CD8-positive, alpha-beta T cell (primary cell): ENCODE measurements at regions of chr11 and their contacts with region 1.

Region 1: GRCh38 chr11:34357701-34358257 is at the start of gene ABTB2:
- DNase-seq: peak; percentile 94 to 98 (median 97)
- ATAC-seq: peak; percentile 89
- H3K4me3 ChIP-seq: peak within 1 kb of the TSS; percentile 65 to 86
- H3K4me3 Mint-ChIP-seq: peak within 1 kb of the TSS; percentile 87
- H3K27ac ChIP-seq: peak within 1 kb of the TSS; percentile 21 to 38
- H3K27ac Mint-ChIP-seq: peak within 1 kb of the TSS; percentile 74
- H3K4me1 ChIP-seq: peaks cover 22% of the 10 kb centered on the region
- H3K4me1 Mint-ChIP-seq: peaks cover 19% of the 10 kb centered on the region
- H3K27me3 ChIP-seq: peaks cover 18 to 26% of the 10 kb centered on the region in 2 experiments
- H3K27me3 Mint-ChIP-seq: peaks cover 43% of the 10 kb centered on the region
- CTCF ChIP-seq: no peak
- total RNA-seq, gene ABTB2: 2.2 to 2.7 TPM

Region 2: DNA sequence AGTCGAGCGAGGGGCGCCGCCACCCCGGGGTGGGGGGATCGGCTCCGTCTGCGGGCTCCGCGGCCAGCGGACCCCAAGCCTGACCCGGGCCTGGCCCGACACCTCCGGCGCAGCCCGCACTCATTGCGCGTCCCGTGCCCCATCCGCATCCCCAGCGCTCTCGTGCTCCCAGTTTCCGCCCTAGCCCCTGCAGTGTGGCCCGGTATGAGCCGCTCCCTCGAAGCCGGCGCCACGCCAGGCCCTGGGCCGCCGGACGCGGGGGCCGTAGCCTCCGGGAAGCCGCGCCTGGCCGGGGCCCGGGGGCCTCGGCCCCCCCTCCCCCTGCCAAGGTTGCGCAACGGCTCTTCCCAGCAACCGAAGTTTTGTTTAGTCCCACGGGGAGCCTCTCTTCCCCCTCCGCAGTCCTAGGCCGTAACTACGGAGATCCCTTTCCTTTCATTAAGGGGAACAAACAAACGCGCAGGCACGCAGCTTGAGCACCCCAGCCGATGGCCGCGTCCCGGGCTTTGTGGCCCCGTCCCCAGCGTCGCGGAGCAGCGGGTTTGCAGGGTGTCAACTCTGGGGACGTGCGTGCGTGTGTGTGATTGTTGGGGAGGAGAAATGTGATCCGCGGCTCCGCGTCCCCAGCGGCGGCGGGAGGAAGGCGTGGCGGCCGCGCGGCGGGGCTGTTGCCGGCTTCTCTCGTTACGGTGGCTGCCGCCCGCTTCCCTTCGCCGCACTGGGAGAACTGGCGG is 1099.7 kb before region 1 on chr11:
- CTCF ChIA-PET with region 1: no interaction called
- POLR2A ChIA-PET with region 1: no interaction called
- intact Hi-C with region 1: loop called in 1 of 2 experiments (anchors 5 kb)
- DNase-seq: peak; percentile 48 to 88 (median 73)
- ATAC-seq: peak; percentile 61
- H3K4me3 ChIP-seq: peak overlapping the region; percentile 72 to 98
- H3K4me3 Mint-ChIP-seq: peak overlapping the region; percentile 93
- H3K27ac ChIP-seq: peak overlapping the region; percentile 92 to 98
- H3K27ac Mint-ChIP-seq: peak overlapping the region; percentile 99
- H3K4me1 ChIP-seq: peaks cover 28% of the 10 kb centered on the region
- H3K4me1 Mint-ChIP-seq: peaks cover 46% of the 10 kb centered on the region
- H3K27me3 ChIP-seq: no peaks in the 10 kb centered on the region
- H3K27me3 Mint-ChIP-seq: no peaks in the 10 kb centered on the region
- CTCF ChIP-seq: peak; percentile 23

Region 3: DNA sequence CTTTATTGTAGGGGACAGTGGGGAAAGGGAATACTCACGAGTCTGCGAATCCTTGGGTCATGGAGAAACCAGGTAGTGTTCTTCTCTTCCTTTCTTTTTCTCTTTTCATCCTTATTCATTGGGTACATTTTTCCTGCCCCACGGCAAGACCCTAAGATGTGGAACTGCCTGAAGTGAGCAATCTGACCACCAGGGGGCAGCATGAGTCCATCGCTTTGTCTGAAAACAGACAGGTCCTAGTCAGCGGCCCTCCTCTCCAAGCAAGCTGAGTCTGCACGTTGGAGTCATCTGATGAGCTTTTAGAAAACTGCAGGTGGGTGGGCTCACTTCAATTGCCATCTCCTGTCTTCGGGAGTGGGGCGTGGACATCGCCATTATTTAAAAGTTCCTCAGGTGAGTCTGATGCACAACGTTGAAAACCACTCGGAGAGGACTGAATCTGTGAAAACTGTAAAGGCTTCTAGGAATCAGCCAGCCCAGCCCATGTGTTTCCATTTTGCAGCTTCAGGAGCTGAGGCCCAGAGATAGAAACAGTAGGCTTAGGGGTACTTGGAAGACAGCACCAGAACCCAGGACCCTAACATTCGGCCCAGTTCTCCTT is 549.5 kb before region 1 on chr11:
- CTCF ChIA-PET with region 1: interaction called, 3 read pairs
- POLR2A ChIA-PET with region 1: no interaction called
- intact Hi-C with region 1: loop called (anchors 1 kb)
- DNase-seq: peak; percentile 69 to 93 (median 83)
- ATAC-seq: peak; percentile 97
- H3K4me3 ChIP-seq: no peak overlapping the region
- H3K4me3 Mint-ChIP-seq: no peak overlapping the region
- H3K27ac ChIP-seq: no peak overlapping the region
- H3K27ac Mint-ChIP-seq: no peak overlapping the region
- H3K4me1 ChIP-seq: no peaks in the 10 kb centered on the region
- H3K4me1 Mint-ChIP-seq: peaks cover 2% of the 10 kb centered on the region
- H3K27me3 ChIP-seq: no peaks in the 10 kb centered on the region
- H3K27me3 Mint-ChIP-seq: peaks cover 9% of the 10 kb centered on the region
- CTCF ChIP-seq: peak; percentile 90

Region 4: GRCh38 chr11:34051349-34052035 is 306.3 kb before region 1 on chr11 and contains the start of gene CAPRIN1:
- CTCF ChIA-PET with region 1: no interaction called
- POLR2A ChIA-PET with region 1: interaction called, 10 read pairs
- intact Hi-C with region 1: loop called (anchors 1 to 2 kb)
- DNase-seq: peak; percentile 71 to 93 (median 83)
- ATAC-seq: peak; percentile 70
- H3K4me3 ChIP-seq: peak within 1 kb of the TSS; percentile 79 to 85
- H3K4me3 Mint-ChIP-seq: peak within 1 kb of the TSS; percentile 98
- H3K27ac ChIP-seq: peak within 1 kb of the TSS; percentile 98 to 99
- H3K27ac Mint-ChIP-seq: peak within 1 kb of the TSS; percentile 96
- H3K4me1 ChIP-seq: peaks cover 35% of the 10 kb centered on the region
- H3K4me1 Mint-ChIP-seq: peaks cover 29% of the 10 kb centered on the region
- H3K27me3 ChIP-seq: no peaks in the 10 kb centered on the region
- H3K27me3 Mint-ChIP-seq: peaks cover 3% of the 10 kb centered on the region
- CTCF ChIP-seq: no peak
- total RNA-seq, gene CAPRIN1: 92.8 to 102 TPM

Region 5: GRCh38 chr11:34174412-34175041 is 183.3 kb before region 1 on chr11:
- CTCF ChIA-PET with region 1: interaction called, 119 read pairs
- POLR2A ChIA-PET with region 1: interaction called, 8 read pairs
- intact Hi-C with region 1: loop called in 1 of 2 experiments (anchors 1 kb)
- DNase-seq: peak; percentile 61 to 87 (median 81)
- ATAC-seq: peak; percentile 100
- H3K4me3 ChIP-seq: peak overlapping the region in 1 of 2 experiments; percentile 18
- H3K4me3 Mint-ChIP-seq: peak overlapping the region; percentile 43
- H3K27ac ChIP-seq: no peak overlapping the region
- H3K27ac Mint-ChIP-seq: no peak overlapping the region
- H3K4me1 ChIP-seq: peaks cover 4% of the 10 kb centered on the region
- H3K4me1 Mint-ChIP-seq: peaks cover 3% of the 10 kb centered on the region
- H3K27me3 ChIP-seq: no peaks in the 10 kb centered on the region
- H3K27me3 Mint-ChIP-seq: peaks cover 4% of the 10 kb centered on the region
- CTCF ChIP-seq: peak; percentile 79

Region 6: GRCh38 chr11:34214961-34215805 is 142.6 kb before region 1 on chr11:
- CTCF ChIA-PET with region 1: no interaction called
- POLR2A ChIA-PET with region 1: no interaction called
- intact Hi-C with region 1: no loop called
- DNase-seq: peak in 5 of 9 experiments; percentile 11 to 47 (median 18)
- ATAC-seq: peak; percentile 51
- H3K4me3 ChIP-seq: no peak overlapping the region
- H3K4me3 Mint-ChIP-seq: no peak overlapping the region
- H3K27ac ChIP-seq: no peak overlapping the region
- H3K27ac Mint-ChIP-seq: no peak overlapping the region
- H3K4me1 ChIP-seq: no peaks in the 10 kb centered on the region
- H3K4me1 Mint-ChIP-seq: no peaks in the 10 kb centered on the region
- H3K27me3 ChIP-seq: no peaks in the 10 kb centered on the region
- H3K27me3 Mint-ChIP-seq: no peaks in the 10 kb centered on the region
- CTCF ChIP-seq: no peak

Region 7: GRCh38 chr11:34344768-34345539 is 12.8 kb before region 1 on chr11:
- CTCF ChIA-PET with region 1: interaction called, 28 read pairs
- POLR2A ChIA-PET with region 1: interaction called, 5 read pairs
- intact Hi-C with region 1: no loop called
- DNase-seq: no peak
- ATAC-seq: no peak
- H3K4me3 ChIP-seq: no peak overlapping the region
- H3K4me3 Mint-ChIP-seq: no peak overlapping the region
- H3K27ac ChIP-seq: no peak overlapping the region
- H3K27ac Mint-ChIP-seq: no peak overlapping the region
- H3K4me1 ChIP-seq: no peaks in the 10 kb centered on the region
- H3K4me1 Mint-ChIP-seq: no peaks in the 10 kb centered on the region
- H3K27me3 ChIP-seq: no peaks in the 10 kb centered on the region
- H3K27me3 Mint-ChIP-seq: no peaks in the 10 kb centered on the region
- CTCF ChIP-seq: no peak

Region 8: DNA sequence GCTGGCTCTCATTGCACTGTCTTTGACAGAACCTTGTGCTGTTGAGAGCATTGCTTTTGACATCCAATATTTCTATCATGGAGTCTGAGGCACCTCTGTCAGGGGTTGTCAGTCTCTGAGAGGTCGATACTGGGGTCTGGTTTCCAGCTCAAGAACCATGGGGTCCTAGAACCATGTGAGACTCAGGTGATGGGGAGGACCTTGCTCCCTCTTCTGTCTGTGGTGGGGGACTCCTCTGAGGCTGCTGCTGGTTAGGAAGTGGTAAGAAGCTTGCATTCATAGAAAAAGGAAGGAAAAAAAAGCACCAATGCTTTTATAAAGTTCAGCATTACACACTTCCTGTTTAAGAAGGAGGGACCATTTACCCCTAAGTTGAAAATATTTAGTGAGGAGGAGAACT is 689.4 kb after region 1 on chr11:
- CTCF ChIA-PET with region 1: no interaction called
- POLR2A ChIA-PET with region 1: no interaction called
- intact Hi-C with region 1: no loop called
- DNase-seq: peak in 8 of 9 experiments; percentile 26 to 92 (median 68)
- ATAC-seq: peak; percentile 62
- H3K4me3 ChIP-seq: no peak overlapping the region
- H3K4me3 Mint-ChIP-seq: peak overlapping the region; percentile 36
- H3K27ac ChIP-seq: peak overlapping the region; percentile 53 to 96
- H3K27ac Mint-ChIP-seq: peak overlapping the region; percentile 100
- H3K4me1 ChIP-seq: peaks cover 69% of the 10 kb centered on the region
- H3K4me1 Mint-ChIP-seq: peaks cover 80% of the 10 kb centered on the region
- H3K27me3 ChIP-seq: no peaks in the 10 kb centered on the region
- H3K27me3 Mint-ChIP-seq: no peaks in the 10 kb centered on the region
- CTCF ChIP-seq: no peak

Region 9: DNA sequence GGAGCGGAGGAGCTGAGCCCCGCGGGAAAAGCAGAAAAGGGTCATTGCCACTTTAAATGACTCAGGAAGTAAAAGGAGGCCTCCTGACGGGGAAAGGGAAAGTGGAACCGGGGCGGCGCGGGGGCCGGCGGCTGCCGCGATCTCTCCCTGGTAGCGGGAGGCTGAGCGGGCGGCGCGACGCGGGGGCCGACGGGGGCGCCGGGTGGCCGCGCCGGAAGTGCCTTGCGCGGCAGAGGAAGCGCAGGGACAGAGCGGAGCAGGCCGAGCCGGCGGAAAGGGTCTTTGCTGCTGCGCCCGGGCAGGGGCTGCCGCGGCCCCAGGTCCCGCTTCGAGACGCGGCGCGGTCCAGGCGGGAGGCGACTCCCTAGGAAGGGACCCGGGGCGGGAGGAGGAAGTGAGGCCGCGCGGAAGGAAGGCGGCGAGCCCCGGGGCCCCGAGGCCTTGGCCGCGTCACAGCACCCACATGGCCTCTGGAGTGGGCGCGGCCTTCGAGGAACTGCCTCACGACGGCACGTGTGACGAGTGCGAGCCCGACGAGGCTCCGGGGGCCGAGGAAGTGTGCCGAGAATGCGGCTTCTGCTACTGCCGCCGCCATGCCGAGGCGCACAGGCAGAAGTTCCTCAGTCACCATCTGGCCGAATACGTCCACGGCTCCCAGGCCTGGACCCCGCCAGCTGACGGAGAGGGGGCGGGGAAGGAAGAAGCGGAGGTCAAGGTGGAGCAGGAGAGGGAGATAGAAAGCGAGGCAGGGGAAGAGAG is 1305.0 kb after region 1 on chr11 and contains the start of gene TRIM44:
- CTCF ChIA-PET with region 1: no interaction called
- POLR2A ChIA-PET with region 1: no interaction called
- intact Hi-C with region 1: loop called in 1 of 2 experiments (anchors 5 kb)
- DNase-seq: peak; percentile 57 to 89 (median 79)
- ATAC-seq: peak; percentile 81
- H3K4me3 ChIP-seq: peak within 1 kb of the TSS; percentile 91 to 97
- H3K4me3 Mint-ChIP-seq: peak within 1 kb of the TSS; percentile 96
- H3K27ac ChIP-seq: peak within 1 kb of the TSS; percentile 84 to 85
- H3K27ac Mint-ChIP-seq: peak within 1 kb of the TSS; percentile 97
- H3K4me1 ChIP-seq: peaks cover 23% of the 10 kb centered on the region
- H3K4me1 Mint-ChIP-seq: peaks cover 47% of the 10 kb centered on the region
- H3K27me3 ChIP-seq: peaks cover 0 to 4% of the 10 kb centered on the region in 2 experiments
- H3K27me3 Mint-ChIP-seq: no peaks in the 10 kb centered on the region
- CTCF ChIP-seq: no peak
- total RNA-seq, gene TRIM44: 25.7 to 29.5 TPM